ENCODE measurements at regions of chr12 and their contacts with region 1.

Region 1: GRCh38 chr12:54658306-54659264 is 10.4 kb upstream of the DCD start:
- DNase-seq: peak in 8 of 9 experiments; percentile 5 to 57 (median 38)
- ATAC-seq: no peak
- H3K4me3 ChIP-seq: no peak overlapping the region
- H3K4me3 Mint-ChIP-seq: no peak overlapping the region
- H3K27ac ChIP-seq: no peak overlapping the region
- H3K27ac Mint-ChIP-seq: no peak overlapping the region
- H3K4me1 ChIP-seq: no peaks in the 10 kb centered on the region
- H3K4me1 Mint-ChIP-seq: no peaks in the 10 kb centered on the region
- H3K27me3 ChIP-seq: no peaks in the 10 kb centered on the region
- H3K27me3 Mint-ChIP-seq: peaks cover 17% of the 10 kb centered on the region
- CTCF ChIP-seq: peak; percentile 51

Region 2: DNA sequence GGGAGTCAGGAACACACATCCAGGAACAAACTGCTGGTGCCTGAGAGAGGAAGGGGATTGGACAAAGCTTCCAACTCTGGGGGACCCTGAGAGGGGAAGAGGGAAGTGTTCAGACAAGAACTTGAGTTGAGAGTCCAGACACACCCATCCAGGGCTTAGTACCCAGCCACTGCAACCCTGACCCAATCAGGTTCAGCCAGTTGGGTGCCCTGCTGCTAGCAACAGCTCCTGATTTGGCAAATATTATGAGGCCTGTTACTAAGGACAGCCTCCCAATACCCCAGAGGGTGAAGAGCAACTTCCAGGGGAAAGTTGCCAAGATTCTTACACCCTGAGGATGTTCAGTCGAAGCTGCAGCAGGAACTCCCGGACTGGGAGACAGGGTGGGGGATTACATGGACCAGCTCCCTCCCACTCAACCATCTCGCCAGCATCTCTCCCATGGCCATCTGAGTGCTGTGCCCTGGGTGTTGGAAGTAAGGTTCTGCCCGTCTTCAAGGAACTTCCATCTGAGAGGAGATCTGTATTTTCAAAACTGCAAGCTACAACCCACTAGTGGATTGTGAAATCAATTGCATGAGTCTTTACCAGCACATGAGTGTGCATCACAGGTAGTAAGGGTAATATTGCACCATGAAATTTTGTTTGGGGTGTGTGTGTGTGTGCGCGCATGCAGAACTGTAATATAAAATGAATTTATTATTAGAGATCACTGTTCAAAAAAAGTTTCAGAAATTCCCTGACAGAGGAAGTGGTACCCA is 1798.3 kb before region 1 on chr12:
- CTCF ChIA-PET with region 1: no interaction called
- POLR2A ChIA-PET with region 1: no interaction called
- intact Hi-C with region 1: no loop called
- DNase-seq: no peak
- ATAC-seq: no peak
- H3K4me3 ChIP-seq: no peak overlapping the region
- H3K4me3 Mint-ChIP-seq: no peak overlapping the region
- H3K27ac ChIP-seq: no peak overlapping the region
- H3K27ac Mint-ChIP-seq: no peak overlapping the region
- H3K4me1 ChIP-seq: no peaks in the 10 kb centered on the region
- H3K4me1 Mint-ChIP-seq: no peaks in the 10 kb centered on the region
- H3K27me3 ChIP-seq: no peaks in the 10 kb centered on the region
- H3K27me3 Mint-ChIP-seq: no peaks in the 10 kb centered on the region
- CTCF ChIP-seq: no peak

Region 3: GRCh38 chr12:54641554-54641953 is 17.0 kb before region 1 on chr12:
- CTCF ChIA-PET with region 1: interaction called, 10 read pairs
- POLR2A ChIA-PET with region 1: no interaction called
- intact Hi-C with region 1: no loop called
- DNase-seq: no peak
- ATAC-seq: no peak
- H3K4me3 ChIP-seq: no peak overlapping the region
- H3K4me3 Mint-ChIP-seq: no peak overlapping the region
- H3K27ac ChIP-seq: no peak overlapping the region
- H3K27ac Mint-ChIP-seq: no peak overlapping the region
- H3K4me1 ChIP-seq: no peaks in the 10 kb centered on the region
- H3K4me1 Mint-ChIP-seq: no peaks in the 10 kb centered on the region
- H3K27me3 ChIP-seq: no peaks in the 10 kb centered on the region
- H3K27me3 Mint-ChIP-seq: peaks cover 19% of the 10 kb centered on the region
- CTCF ChIP-seq: no peak

Region 4: DNA sequence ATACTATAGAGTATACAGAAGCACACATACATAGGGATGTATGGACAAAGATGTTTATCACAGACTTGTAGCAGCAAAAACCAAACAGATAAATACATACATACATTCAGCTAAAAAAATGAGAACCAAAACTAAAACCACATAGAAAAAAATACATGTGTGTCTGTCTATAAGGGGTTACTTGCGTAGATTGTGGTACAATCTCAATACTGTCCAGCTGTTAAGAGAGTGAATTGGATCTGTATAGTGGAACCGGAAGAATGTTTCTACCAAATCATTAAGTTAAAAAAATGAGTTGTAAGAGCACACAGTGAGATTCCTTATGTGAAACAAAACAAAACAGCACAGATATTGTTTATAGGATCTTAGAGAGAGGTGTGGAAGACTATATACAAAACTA is 33.8 kb after region 1 on chr12:
- CTCF ChIA-PET with region 1: no interaction called
- POLR2A ChIA-PET with region 1: no interaction called
- intact Hi-C with region 1: no loop called
- DNase-seq: no peak
- ATAC-seq: no peak
- H3K4me3 ChIP-seq: no peak overlapping the region
- H3K4me3 Mint-ChIP-seq: no peak overlapping the region
- H3K27ac ChIP-seq: no peak overlapping the region
- H3K27ac Mint-ChIP-seq: no peak overlapping the region
- H3K4me1 ChIP-seq: no peaks in the 10 kb centered on the region
- H3K4me1 Mint-ChIP-seq: no peaks in the 10 kb centered on the region
- H3K27me3 ChIP-seq: peaks cover 0 to under 1% of the 10 kb centered on the region in 2 experiments
- H3K27me3 Mint-ChIP-seq: peaks cover 49% of the 10 kb centered on the region
- CTCF ChIP-seq: no peak

Region 5: DNA sequence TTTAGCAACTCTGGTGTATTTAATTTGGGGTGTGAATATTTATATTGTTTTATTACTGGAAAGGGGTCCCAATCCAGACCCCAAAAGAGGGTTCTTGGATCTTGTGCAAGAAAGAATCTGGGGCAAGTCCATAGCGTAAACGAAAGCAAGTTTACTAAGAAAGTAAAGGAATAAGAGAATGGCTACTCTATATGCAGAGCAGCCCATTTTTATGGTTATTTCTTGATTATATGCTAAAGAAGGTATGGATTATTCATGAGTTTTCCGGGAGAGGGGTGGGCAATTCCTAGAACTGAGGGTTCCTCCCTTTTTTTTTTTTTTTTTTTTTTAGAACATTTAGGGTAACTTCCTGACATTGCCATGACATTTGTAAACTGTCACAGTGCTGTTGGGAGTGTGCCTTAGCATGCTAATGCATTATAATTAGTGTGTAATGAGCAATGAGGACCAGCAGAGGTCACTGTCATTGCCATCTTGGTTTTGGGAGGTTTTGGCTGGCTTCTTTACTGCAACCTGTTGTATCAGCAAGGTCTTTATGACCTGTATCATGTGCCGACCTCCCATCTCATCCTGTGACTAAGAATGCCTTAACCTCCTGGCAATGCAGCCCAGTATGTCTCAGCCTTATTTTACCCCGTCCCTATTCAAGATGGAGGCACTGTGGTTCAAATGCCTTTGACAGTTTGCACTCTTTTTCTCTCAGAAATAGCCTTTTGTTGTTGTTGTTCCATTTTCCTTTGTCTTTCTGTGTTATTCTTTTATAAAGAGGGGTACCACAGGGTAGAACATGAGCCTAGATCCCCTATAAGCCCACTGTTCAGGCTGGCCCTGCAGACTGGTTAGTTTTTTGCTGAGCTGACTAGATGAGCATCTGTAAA is 65.0 kb after region 1 on chr12:
- CTCF ChIA-PET with region 1: no interaction called
- POLR2A ChIA-PET with region 1: no interaction called
- intact Hi-C with region 1: no loop called
- DNase-seq: peak in 5 of 9 experiments; percentile 10 to 70 (median 26)
- ATAC-seq: peak; percentile 72
- H3K4me3 ChIP-seq: no peak overlapping the region
- H3K4me3 Mint-ChIP-seq: no peak overlapping the region
- H3K27ac ChIP-seq: no peak overlapping the region
- H3K27ac Mint-ChIP-seq: no peak overlapping the region
- H3K4me1 ChIP-seq: peaks cover 10% of the 10 kb centered on the region
- H3K4me1 Mint-ChIP-seq: peaks cover 18% of the 10 kb centered on the region
- H3K27me3 ChIP-seq: no peaks in the 10 kb centered on the region
- H3K27me3 Mint-ChIP-seq: peaks cover 6% of the 10 kb centered on the region
- CTCF ChIP-seq: peak; percentile 67

Region 6: DNA sequence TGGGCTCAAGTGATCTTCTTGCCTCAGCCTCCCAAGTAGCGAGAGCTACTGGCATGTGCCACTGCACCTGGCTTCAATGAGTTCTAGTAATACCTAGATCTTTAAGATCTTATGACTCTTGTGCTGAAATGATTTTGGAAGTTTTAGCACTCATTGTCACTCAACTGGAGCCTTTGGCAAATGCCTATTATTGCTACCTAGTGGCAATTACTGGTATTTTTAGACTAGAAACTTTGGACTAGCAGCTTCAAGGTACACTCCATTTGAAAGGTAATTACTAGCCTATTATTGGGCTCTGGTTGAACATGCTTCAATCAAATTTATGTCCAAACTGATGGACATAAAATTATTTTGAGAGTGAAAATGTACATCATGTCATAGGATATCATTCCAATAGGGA is 115.0 kb after region 1 on chr12:
- CTCF ChIA-PET with region 1: no interaction called
- POLR2A ChIA-PET with region 1: no interaction called
- intact Hi-C with region 1: no loop called
- DNase-seq: no peak
- ATAC-seq: no peak
- H3K4me3 ChIP-seq: no peak overlapping the region
- H3K4me3 Mint-ChIP-seq: no peak overlapping the region
- H3K27ac ChIP-seq: no peak overlapping the region
- H3K27ac Mint-ChIP-seq: no peak overlapping the region
- H3K4me1 ChIP-seq: peaks cover 16% of the 10 kb centered on the region
- H3K4me1 Mint-ChIP-seq: peaks cover 29% of the 10 kb centered on the region
- H3K27me3 ChIP-seq: no peaks in the 10 kb centered on the region
- H3K27me3 Mint-ChIP-seq: peaks cover 4% of the 10 kb centered on the region
- CTCF ChIP-seq: no peak

Measured in CD8-positive, alpha-beta T cell (primary cell).